ENCODE measurements at regions of chr9 and their contacts with region 1.

Region 1: GRCh38 chr9:27365707-27366376 is 68.9 kb upstream of the EQTN start:
- DNase-seq: peak; percentile 82
- ATAC-seq: peak; percentile 99
- H3K4me3 Mint-ChIP-seq: peak overlapping the region; percentile 30
- H3K27ac Mint-ChIP-seq: peak overlapping the region; percentile 58
- H3K4me1 Mint-ChIP-seq: peaks cover 35% of the 10 kb centered on the region
- H3K27me3 Mint-ChIP-seq: peaks cover 15% of the 10 kb centered on the region

Region 2: DNA sequence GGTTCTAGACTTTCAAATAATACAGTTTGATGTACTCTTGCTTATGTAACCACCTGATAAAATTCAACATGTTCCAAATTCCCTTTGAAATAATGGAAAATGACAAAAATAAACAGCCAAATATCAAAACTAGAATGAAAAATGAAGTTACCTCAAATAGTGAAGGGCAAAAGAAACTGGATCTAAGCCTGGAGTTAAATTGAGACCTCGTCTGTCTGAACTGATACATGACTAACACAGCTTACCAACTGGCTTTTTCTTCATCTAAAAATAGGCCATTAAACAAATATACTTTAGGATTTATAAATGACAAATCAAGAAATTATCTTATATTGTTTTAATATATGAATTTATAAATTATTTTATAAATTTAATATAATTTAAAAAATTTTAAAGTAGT is 461.2 kb before region 1 on chr9:
- CTCF ChIA-PET with region 1: no interaction called
- POLR2A ChIA-PET with region 1: no interaction called
- intact Hi-C with region 1: no loop called
- DNase-seq: no peak
- ATAC-seq: no peak
- H3K4me3 Mint-ChIP-seq: no peak overlapping the region
- H3K27ac Mint-ChIP-seq: no peak overlapping the region
- H3K4me1 Mint-ChIP-seq: no peaks in the 10 kb centered on the region
- H3K27me3 Mint-ChIP-seq: no peaks in the 10 kb centered on the region

Region 3: DNA sequence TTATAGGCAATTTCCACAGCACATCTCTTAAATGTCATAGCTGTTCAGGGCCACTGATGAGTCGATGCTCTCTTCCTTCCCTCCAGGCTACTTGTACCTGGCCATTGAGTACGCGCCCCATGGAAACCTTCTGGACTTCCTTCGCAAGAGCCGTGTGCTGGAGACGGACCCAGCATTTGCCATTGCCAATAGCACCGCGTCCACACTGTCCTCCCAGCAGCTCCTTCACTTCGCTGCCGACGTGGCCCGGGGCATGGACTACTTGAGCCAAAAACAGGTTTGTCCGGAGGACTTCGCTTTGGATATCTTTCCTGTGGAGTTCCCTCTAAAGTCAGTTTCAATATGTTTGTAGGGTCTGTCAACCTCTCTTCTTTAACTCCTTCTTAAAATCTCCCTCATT is 153.2 kb before region 1 on chr9:
- CTCF ChIA-PET with region 1: no interaction called
- POLR2A ChIA-PET with region 1: no interaction called
- intact Hi-C with region 1: no loop called
- DNase-seq: no peak
- ATAC-seq: no peak
- H3K4me3 Mint-ChIP-seq: no peak overlapping the region
- H3K27ac Mint-ChIP-seq: no peak overlapping the region
- H3K4me1 Mint-ChIP-seq: no peaks in the 10 kb centered on the region
- H3K27me3 Mint-ChIP-seq: no peaks in the 10 kb centered on the region

Region 4: GRCh38 chr9:27377147-27377807 is 11.4 kb after region 1 on chr9:
- CTCF ChIA-PET with region 1: no interaction called
- POLR2A ChIA-PET with region 1: no interaction called
- intact Hi-C with region 1: no loop called
- DNase-seq: no peak
- ATAC-seq: no peak
- H3K4me3 Mint-ChIP-seq: no peak overlapping the region
- H3K27ac Mint-ChIP-seq: no peak overlapping the region
- H3K4me1 Mint-ChIP-seq: peaks cover 5% of the 10 kb centered on the region
- H3K27me3 Mint-ChIP-seq: no peaks in the 10 kb centered on the region

Region 5: GRCh38 chr9:27499481-27499880 is 133.6 kb after region 1 on chr9:
- CTCF ChIA-PET with region 1: no interaction called
- POLR2A ChIA-PET with region 1: no interaction called
- intact Hi-C with region 1: loop called (anchors 2 kb)
- DNase-seq: no peak
- ATAC-seq: peak; percentile 90
- H3K4me3 Mint-ChIP-seq: no peak overlapping the region
- H3K27ac Mint-ChIP-seq: no peak overlapping the region
- H3K4me1 Mint-ChIP-seq: peaks cover 19% of the 10 kb centered on the region
- H3K27me3 Mint-ChIP-seq: peaks cover 2% of the 10 kb centered on the region

Region 6: DNA sequence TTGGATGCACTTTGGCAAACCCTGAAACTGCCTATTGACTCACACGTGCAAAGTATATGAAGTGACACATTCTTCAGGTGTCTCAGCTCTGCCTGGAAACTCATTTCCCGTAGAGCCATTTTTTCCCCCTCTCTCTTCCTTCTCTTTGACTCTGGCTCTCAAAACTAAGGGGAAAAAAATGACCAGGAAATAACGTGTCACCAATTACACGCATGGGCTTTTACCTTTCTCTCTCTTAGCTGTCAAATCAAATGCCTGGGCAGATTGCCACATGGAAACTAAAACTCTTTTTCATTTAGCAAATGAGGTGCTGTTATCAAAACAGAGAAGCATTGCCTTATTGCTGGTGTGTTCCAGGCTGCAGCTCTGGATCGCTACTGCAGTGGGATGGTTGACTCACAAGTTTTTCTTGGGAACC is 139.9 kb after region 1 on chr9:
- CTCF ChIA-PET with region 1: no interaction called
- POLR2A ChIA-PET with region 1: no interaction called
- intact Hi-C with region 1: loop called (anchors 2 kb)
- DNase-seq: peak; percentile 46
- ATAC-seq: peak; percentile 84
- H3K4me3 Mint-ChIP-seq: no peak overlapping the region
- H3K27ac Mint-ChIP-seq: no peak overlapping the region
- H3K4me1 Mint-ChIP-seq: peaks cover 21% of the 10 kb centered on the region
- H3K27me3 Mint-ChIP-seq: peaks cover 2% of the 10 kb centered on the region

Measured in activated CD4-positive, alpha-beta T cell treated with anti-CD3 and anti-CD28 coated beads for 36 hours (primary cell).